ENCODE measurements at regions of chr16 and their contacts with region 1.

Region 1: GRCh38 chr16:11248133-11248532 is 7.9 kb downstream of the SOCS1 start:
- DNase-seq: no peak
- H3K4me3 Mint-ChIP-seq: no peak overlapping the region
- H3K27ac Mint-ChIP-seq: peak overlapping the region; percentile 32
- H3K4me1 Mint-ChIP-seq: peaks cover 69% of the 10 kb centered on the region
- H3K27me3 Mint-ChIP-seq: no peaks in the 10 kb centered on the region

Region 2: DNA sequence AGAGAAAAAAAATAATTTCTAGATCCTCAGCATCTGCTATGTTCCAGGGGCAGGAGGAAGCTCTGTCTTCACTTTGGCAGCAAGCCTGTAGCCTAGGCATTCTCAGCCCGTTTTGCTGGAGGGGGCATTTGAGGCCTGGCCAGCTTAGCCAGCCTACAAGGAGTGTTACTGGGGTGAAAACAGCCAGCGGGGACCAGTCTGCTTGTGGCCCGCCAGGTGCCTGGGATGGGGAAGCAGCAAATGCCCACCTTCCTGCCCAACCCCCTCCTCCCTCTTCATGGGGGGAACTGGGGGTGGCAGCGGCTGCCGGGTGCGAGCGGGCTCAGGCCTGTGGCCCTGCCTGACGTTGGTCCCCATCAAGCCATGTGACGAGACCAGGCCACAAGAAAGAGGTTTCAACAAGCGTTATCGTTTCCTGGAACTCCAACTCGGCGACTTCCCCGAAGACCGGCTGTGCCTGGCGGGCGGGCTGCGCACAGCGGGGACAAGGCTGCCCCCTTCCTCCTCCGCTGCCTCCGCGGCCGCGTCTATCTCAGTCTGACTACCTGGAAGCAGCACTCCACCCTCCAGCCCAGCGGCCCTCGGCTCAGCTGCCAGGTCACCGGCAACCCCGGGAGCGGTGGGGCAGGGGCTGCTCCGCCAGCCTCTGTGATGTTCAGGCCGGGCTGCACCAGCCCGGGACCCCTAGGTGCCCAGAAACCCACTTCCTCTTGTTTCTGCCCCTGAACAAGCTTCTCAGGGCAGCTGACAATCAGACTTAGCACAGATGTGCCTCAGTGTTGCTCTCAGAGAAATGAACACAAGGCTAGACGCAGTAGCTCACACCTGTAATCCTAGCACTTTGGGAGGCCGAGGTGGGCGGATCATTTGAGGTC is 15.0 kb before region 1 on chr16:
- CTCF ChIA-PET with region 1: interaction called, 6 read pairs
- POLR2A ChIA-PET with region 1: interaction called, 302 read pairs
- DNase-seq: peak; percentile 95
- H3K4me3 Mint-ChIP-seq: peak overlapping the region; percentile 66
- H3K27ac Mint-ChIP-seq: peak overlapping the region; percentile 98
- H3K4me1 Mint-ChIP-seq: peaks cover 86% of the 10 kb centered on the region
- H3K27me3 Mint-ChIP-seq: no peaks in the 10 kb centered on the region